Astrocyte of the cerebellum (primary cell): ENCODE measurements at regions of chr1 and their contacts with region 1.

Region 1: DNA sequence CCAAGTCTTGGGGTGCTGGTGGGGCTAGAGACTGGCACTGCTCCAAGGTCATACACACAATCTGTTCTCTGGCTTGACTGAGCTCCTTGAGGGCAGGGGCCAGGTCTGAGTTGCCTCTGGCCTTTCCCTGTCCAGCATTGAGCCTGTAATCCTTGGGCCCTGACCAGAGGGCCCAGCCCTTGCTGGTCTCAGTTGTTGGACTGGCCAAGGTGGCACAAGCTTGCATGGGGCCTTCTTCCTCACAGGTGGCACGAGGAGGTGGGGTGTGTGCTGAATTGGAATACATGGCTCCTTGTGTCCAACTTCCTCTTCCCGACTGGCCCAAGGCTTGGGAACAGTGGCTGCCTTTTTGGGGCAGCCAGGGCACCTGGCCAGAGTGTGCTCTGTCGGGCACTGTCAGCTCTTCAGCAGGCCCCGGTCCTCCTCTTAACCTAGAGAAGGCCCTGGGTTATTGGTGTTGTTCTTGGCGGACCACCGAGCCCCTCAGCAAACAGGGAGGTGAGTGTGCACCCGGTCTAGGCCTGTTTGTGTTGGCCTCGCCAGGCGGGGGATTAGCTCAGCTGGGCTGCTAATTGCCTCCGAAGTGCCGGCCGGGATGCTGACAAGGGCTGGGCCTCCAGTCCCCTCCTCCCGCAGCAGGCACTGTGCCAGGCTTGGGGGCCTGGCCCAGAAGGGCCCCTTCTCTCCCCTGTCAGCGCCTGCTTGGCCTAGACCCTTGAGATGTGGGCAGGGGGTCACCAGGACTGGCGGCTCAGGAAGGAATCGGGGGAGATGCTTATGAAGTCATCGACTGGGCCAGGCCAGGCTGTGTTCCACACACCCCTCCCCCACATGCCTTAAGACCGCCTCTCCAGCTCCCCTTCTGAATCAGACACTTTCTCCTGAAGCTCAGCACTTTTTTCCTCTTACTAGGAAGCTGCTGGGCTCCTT is 28.5 kb downstream of the WNT4 start:
- DNase-seq: peak; percentile 59
- H3K4me3 ChIP-seq: no peak overlapping the region
- CTCF ChIP-seq: no peak

Region 2: GRCh38 chr1:22052115-22053016 is 62.0 kb before region 1 on chr1 and contains the start of gene CDC42:
- in situ Hi-C with region 1: loop called (anchors 5 kb)
- DNase-seq: peak; percentile 90
- H3K4me3 ChIP-seq: peak within 1 kb of the TSS; percentile 82
- CTCF ChIP-seq: no peak

Region 3: GRCh38 chr1:22216210-22216883 is 102.0 kb after region 1 on chr1:
- in situ Hi-C with region 1: loop called (anchors 5 kb)
- DNase-seq: no peak
- H3K4me3 ChIP-seq: no peak overlapping the region
- CTCF ChIP-seq: no peak